ENCODE measurements at regions of chr3 and their contacts with region 1.

Region 1: GRCh38 chr3:4712143-4712542 is 219.0 kb downstream of the ITPR1 start:
- DNase-seq: no peak
- ATAC-seq: no peak
- H3K4me3 ChIP-seq: no peak overlapping the region
- H3K4me3 Mint-ChIP-seq: no peak overlapping the region
- H3K27ac ChIP-seq: no peak overlapping the region
- H3K27ac Mint-ChIP-seq: no peak overlapping the region
- H3K4me1 ChIP-seq: no peaks in the 10 kb centered on the region
- H3K4me1 Mint-ChIP-seq: peaks cover 0 to 6% (median 0%) of the 10 kb centered on the region in 3 donors
- H3K27me3 ChIP-seq: no peaks in the 10 kb centered on the region
- H3K27me3 Mint-ChIP-seq: no peaks in the 10 kb centered on the region

Region 2: GRCh38 chr3:3665961-3666640 is 1046.0 kb before region 1 on chr3:
- CTCF ChIA-PET with region 1: no interaction called
- POLR2A ChIA-PET with region 1: no interaction called
- DNase-seq: no peak
- ATAC-seq: no peak
- H3K4me3 ChIP-seq: no peak overlapping the region
- H3K4me3 Mint-ChIP-seq: no peak overlapping the region
- H3K27ac ChIP-seq: no peak overlapping the region
- H3K27ac Mint-ChIP-seq: no peak overlapping the region
- H3K4me1 ChIP-seq: no peaks in the 10 kb centered on the region
- H3K4me1 Mint-ChIP-seq: peaks cover 0 to 7% (median 3%) of the 10 kb centered on the region in 3 donors
- H3K27me3 ChIP-seq: no peaks in the 10 kb centered on the region
- H3K27me3 Mint-ChIP-seq: peaks cover 0 to 10% of the 10 kb centered on the region in 2 donors

Region 3: DNA sequence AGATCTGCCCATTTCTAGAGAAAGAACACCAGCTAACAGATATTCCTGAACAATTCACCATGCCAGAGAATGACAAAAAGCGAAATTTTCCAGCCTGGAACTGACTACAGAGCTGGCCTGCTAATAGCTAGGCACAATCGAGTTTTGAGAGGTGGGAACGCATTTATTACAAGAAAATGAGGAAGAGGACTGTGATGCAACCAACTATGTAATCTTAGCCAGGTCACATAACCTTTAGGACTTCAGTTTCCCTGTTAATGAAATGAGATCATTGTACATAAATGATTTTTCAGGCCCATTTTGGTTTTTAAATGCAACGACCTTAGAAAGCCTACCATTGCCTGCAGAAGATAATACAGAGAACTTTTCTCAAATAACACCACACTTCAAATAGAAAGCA is 481.1 kb before region 1 on chr3:
- CTCF ChIA-PET with region 1: no interaction called
- POLR2A ChIA-PET with region 1: no interaction called
- DNase-seq: no peak
- ATAC-seq: no peak
- H3K4me3 ChIP-seq: no peak overlapping the region
- H3K4me3 Mint-ChIP-seq: no peak overlapping the region
- H3K27ac ChIP-seq: no peak overlapping the region
- H3K27ac Mint-ChIP-seq: no peak overlapping the region
- H3K4me1 ChIP-seq: no peaks in the 10 kb centered on the region
- H3K4me1 Mint-ChIP-seq: no peaks in the 10 kb centered on the region
- H3K27me3 ChIP-seq: no peaks in the 10 kb centered on the region
- H3K27me3 Mint-ChIP-seq: no peaks in the 10 kb centered on the region

Region 4: DNA sequence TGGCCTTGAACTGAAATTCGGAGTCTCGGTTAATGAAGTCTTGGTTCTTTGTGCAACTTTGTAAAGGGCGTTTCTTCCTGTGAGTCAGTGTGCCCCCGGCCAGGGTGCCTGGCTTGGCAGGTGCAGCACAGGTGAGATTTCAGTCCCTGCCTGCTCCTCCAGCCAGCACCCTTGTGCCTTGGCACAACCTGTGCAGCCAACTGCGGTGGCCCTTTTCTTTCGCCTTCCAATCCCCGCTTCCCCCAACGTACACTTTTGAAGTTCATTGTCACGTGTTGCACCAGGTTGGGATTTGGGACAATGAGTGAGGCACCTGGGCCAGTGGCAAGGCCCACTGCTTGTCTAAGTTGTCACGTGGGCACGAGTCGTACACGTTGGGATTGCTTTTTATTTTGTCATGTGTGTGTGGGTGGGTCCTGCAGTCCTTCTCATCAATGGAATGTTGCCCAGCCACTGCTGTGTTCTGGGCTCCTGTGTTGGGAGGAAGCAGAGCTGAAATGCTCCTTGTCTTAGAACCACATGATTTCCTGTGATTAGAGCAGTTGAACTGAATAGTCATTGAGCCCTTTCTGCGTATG is 24.2 kb after region 1 on chr3:
- CTCF ChIA-PET with region 1: interaction called, 4 to 10 read pairs
- POLR2A ChIA-PET with region 1: interaction called in 1 of 2 experiments, 3 read pairs
- DNase-seq: peak in 1 of 35 experiments; percentile 25
- ATAC-seq: peak; percentile 53 to 76 (median 65)
- H3K4me3 ChIP-seq: no peak overlapping the region
- H3K4me3 Mint-ChIP-seq: peak overlapping the region in 1 of 3 donors; percentile 75
- H3K27ac ChIP-seq: no peak overlapping the region
- H3K27ac Mint-ChIP-seq: peak overlapping the region; percentile 59 to 79
- H3K4me1 ChIP-seq: peaks cover 11 to 46% of the 10 kb centered on the region in 2 experiments
- H3K4me1 Mint-ChIP-seq: peaks cover 68 to 83% (median 72%) of the 10 kb centered on the region in 3 donors
- H3K27me3 ChIP-seq: no peaks in the 10 kb centered on the region
- H3K27me3 Mint-ChIP-seq: no peaks in the 10 kb centered on the region

Region 5: DNA sequence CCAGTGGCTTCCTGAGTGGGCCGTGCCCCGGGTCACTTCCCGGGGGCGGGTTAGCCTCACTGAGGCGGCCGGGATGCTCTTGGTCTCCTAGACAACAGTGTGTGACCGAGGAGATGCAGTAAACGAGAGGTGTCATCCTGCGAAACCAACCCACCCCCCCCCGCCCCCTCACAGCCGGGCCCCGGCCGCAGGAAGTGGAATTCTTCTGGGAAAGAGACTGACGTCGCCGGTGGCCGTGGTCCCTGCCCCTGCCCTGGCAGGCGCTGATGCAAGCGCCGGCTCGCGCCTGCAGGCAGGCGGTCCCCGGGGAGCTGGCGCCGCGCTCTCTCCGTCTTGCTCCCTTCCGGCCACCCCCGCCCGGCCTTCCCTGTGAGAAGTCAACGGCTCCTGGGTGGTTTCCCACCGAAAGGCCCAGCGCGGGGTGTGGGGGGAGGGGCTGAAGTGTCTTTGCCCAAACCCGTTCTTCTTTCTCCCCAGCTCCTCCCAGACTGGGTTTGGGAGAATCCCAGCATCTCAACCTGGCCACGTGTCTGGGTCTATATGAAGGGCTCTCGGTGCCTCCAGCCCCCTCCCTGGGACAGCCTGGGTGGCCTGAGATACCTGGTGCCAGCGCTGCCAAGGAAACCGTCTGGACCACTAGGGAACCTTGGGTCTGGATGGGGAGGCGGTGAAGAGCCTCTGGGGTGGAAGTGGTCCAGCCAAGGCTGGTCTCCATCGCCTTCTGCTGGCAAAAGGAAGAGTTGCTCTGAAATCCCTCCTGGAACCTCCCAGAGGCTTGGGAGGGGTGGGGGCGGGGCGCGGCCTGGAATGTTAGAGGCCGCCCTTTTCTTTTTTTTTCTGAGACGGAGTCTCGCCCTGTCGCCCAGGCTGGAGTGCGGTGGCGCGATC is 314.4 kb after region 1 on chr3:
- CTCF ChIA-PET with region 1: interaction called, 14 to 27 read pairs
- POLR2A ChIA-PET with region 1: no interaction called
- DNase-seq: peak in 34 of 35 experiments; percentile 22 to 79 (median 47)
- ATAC-seq: peak; percentile 76 to 83 (median 80)
- H3K4me3 ChIP-seq: peak overlapping the region; percentile 62
- H3K4me3 Mint-ChIP-seq: peak overlapping the region; percentile 76 to 83 (median 80)
- H3K27ac ChIP-seq: peak overlapping the region; percentile 69
- H3K27ac Mint-ChIP-seq: peak overlapping the region; percentile 64 to 86
- H3K4me1 ChIP-seq: peaks cover 2 to 19% of the 10 kb centered on the region in 2 experiments
- H3K4me1 Mint-ChIP-seq: peaks cover 5 to 26% (median 15%) of the 10 kb centered on the region in 3 donors
- H3K27me3 ChIP-seq: no peaks in the 10 kb centered on the region
- H3K27me3 Mint-ChIP-seq: no peaks in the 10 kb centered on the region

Region 6: GRCh38 chr3:5041315-5041714 is 329.2 kb after region 1 on chr3:
- CTCF ChIA-PET with region 1: interaction called, 6 to 15 read pairs
- POLR2A ChIA-PET with region 1: no interaction called
- DNase-seq: no peak
- ATAC-seq: no peak
- H3K4me3 ChIP-seq: no peak overlapping the region
- H3K4me3 Mint-ChIP-seq: no peak overlapping the region
- H3K27ac ChIP-seq: no peak overlapping the region
- H3K27ac Mint-ChIP-seq: no peak overlapping the region
- H3K4me1 ChIP-seq: peaks cover 0 to 11% of the 10 kb centered on the region in 2 experiments
- H3K4me1 Mint-ChIP-seq: peaks cover 0 to 11% (median 0%) of the 10 kb centered on the region in 3 donors
- H3K27me3 ChIP-seq: no peaks in the 10 kb centered on the region
- H3K27me3 Mint-ChIP-seq: no peaks in the 10 kb centered on the region

Region 7: GRCh38 chr3:5057857-5058324 is 345.7 kb after region 1 on chr3:
- CTCF ChIA-PET with region 1: interaction called, 39 to 129 read pairs
- POLR2A ChIA-PET with region 1: no interaction called
- DNase-seq: peak; percentile 29 to 87 (median 66)
- ATAC-seq: peak; percentile 88 to 93 (median 92)
- H3K4me3 ChIP-seq: no peak overlapping the region
- H3K4me3 Mint-ChIP-seq: no peak overlapping the region
- H3K27ac ChIP-seq: no peak overlapping the region
- H3K27ac Mint-ChIP-seq: no peak overlapping the region
- H3K4me1 ChIP-seq: no peaks in the 10 kb centered on the region
- H3K4me1 Mint-ChIP-seq: peaks cover 0 to 8% (median 5%) of the 10 kb centered on the region in 3 donors
- H3K27me3 ChIP-seq: peaks cover 0 to under 1% of the 10 kb centered on the region in 2 experiments
- H3K27me3 Mint-ChIP-seq: peaks cover 2 to 6% of the 10 kb centered on the region in 2 donors

Measured in T-cell (primary cell).